ENCODE measurements at regions of chr2 and their contacts with region 1.

Region 1: DNA sequence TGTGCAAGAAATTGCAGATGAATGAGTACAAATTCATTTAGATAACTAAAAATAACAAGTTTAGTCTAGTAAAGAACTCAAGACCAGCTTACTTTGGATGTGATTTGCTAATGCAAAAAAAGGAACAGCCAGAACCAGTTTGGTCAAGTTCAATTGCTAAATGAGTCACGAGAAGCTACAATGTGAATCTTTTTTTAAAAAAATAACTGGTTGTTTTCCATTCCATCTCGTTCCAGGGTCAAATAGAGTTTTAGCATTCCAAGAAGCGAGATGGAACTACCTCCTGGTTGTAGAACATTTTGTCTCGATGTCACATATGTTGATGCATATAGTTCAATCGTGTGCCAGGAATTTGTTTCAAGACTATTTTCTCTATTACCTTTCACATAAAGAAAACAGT is 65.0 kb upstream of the IKZF2 start:
- DNase-seq: no peak
- ATAC-seq: no peak
- H3K4me3 ChIP-seq: no peak overlapping the region
- H3K27ac ChIP-seq: no peak overlapping the region
- H3K4me1 ChIP-seq: no peaks in the 10 kb centered on the region
- H3K27me3 ChIP-seq: no peaks in the 10 kb centered on the region
- CTCF ChIP-seq: no peak
- EP300 ChIP-seq: no peak
- POLR2A ChIP-seq: no peak
- RAD21 ChIP-seq: no peak

Region 2: GRCh38 chr2:213175526-213176162 is 40.8 kb before region 1 on chr2:
- CTCF ChIA-PET with region 1: no interaction called
- POLR2A ChIA-PET with region 1: interaction called, 3 read pairs
- RAD21 ChIA-PET with region 1: no interaction called
- SMC1A ChIA-PET with region 1: interaction called, 26 read pairs
- in situ Hi-C with region 1: no loop called
- intact Hi-C with region 1: no loop called
- DNase-seq: no peak
- ATAC-seq: no peak
- H3K4me3 ChIP-seq: no peak overlapping the region
- H3K27ac ChIP-seq: no peak overlapping the region
- H3K4me1 ChIP-seq: peaks cover 7% of the 10 kb centered on the region; the same call in 1 of the 2 replicates
- H3K27me3 ChIP-seq: no peaks in the 10 kb centered on the region
- CTCF ChIP-seq: no peak
- EP300 ChIP-seq: no peak
- POLR2A ChIP-seq: no peak
- RAD21 ChIP-seq: no peak

Region 3: DNA sequence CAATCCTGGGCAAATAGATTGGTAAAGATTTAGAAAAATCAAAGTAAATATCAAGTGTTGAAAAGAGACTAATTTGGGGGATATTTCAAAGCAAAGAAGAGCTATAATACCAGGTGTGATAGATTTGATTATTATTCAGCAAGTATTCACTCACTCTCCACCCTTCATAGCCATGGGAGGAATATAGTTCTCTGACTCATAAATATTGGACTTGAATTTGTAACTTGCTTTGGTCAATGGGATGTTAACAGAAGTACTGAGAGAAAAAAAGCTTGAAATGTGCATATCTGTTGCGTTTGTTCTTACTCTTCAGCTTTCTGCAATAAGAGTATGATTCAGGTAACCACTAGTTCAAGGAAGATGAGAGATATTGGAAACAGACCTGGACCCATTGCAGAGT is 10.5 kb before region 1 on chr2:
- CTCF ChIA-PET with region 1: interaction called, 6 read pairs
- POLR2A ChIA-PET with region 1: no interaction called
- RAD21 ChIA-PET with region 1: no interaction called
- SMC1A ChIA-PET with region 1: interaction called, 12 read pairs
- in situ Hi-C with region 1: no loop called
- intact Hi-C with region 1: no loop called
- DNase-seq: no peak
- ATAC-seq: no peak
- H3K4me3 ChIP-seq: no peak overlapping the region
- H3K27ac ChIP-seq: no peak overlapping the region
- H3K4me1 ChIP-seq: no peaks in the 10 kb centered on the region
- H3K27me3 ChIP-seq: no peaks in the 10 kb centered on the region
- CTCF ChIP-seq: no peak
- EP300 ChIP-seq: no peak
- POLR2A ChIP-seq: no peak
- RAD21 ChIP-seq: no peak

Region 4: GRCh38 chr2:213227458-213227857 is 11.0 kb after region 1 on chr2:
- CTCF ChIA-PET with region 1: interaction called, 6 read pairs
- POLR2A ChIA-PET with region 1: interaction called, 3 read pairs
- RAD21 ChIA-PET with region 1: interaction called, 5 read pairs
- SMC1A ChIA-PET with region 1: interaction called, 18 read pairs
- in situ Hi-C with region 1: no loop called
- intact Hi-C with region 1: no loop called
- DNase-seq: peak; percentile 88
- ATAC-seq: peak; percentile 82
- H3K4me3 ChIP-seq: no peak overlapping the region
- H3K27ac ChIP-seq: peak overlapping the region; percentile 92
- H3K4me1 ChIP-seq: peaks cover 49% of the 10 kb centered on the region
- H3K27me3 ChIP-seq: no peaks in the 10 kb centered on the region
- CTCF ChIP-seq: no peak
- EP300 ChIP-seq: no peak; a peak in 3 of 4 replicates
- POLR2A ChIP-seq: no peak
- RAD21 ChIP-seq: peak; percentile 30; the same call in 1 of the 2 replicates